WTC11 (cell line): ENCODE measurements at regions of chr4 and their contacts with region 1.

Region 1: DNA sequence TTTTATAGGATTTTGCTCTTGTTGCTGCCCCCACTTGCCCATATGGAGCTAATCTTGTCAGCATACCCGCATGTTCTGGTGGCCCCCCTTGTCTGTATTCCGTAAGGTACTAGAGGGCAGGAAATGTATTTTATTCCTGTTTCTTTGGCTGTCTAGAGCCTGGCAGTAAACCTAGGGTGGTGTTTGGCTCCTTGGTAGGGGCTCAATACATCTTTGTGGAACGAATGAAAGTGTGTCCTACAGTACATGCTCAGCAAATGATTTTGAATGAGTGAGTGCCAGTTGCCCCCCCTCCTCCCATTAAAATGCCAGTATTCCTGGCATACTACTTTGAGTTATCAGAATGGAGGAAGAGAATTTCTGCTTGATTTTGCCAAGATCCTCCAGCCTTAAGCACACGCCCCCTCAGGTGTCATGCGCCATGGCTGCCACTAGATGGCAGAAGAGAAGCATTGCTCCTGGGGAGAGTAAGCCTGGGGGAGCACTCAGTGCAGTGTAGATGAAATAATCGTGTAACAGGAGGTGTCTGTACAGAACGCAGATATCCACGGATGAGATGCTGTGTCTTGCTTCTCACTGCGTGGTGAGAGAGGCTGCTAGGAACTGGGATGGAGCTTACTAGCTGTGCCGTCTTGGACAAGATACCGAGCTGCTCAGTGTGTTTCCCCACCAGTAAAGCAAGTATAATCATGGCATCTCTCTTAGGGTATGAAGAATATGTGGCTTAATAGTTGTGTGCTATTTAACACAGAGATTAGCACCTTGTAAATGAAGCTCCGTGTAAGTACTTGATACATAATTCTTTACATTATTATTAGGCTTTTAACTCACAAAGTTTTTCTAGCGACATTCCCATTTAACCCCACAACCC is 17.2 kb upstream of the RNF212 start:
- DNase-seq: peak; percentile 73
- ATAC-seq: peak; percentile 95
- H3K4me3 Mint-ChIP-seq: no peak overlapping the region
- H3K27ac Mint-ChIP-seq: no peak overlapping the region
- H3K4me1 Mint-ChIP-seq: no peaks in the 10 kb centered on the region
- H3K27me3 Mint-ChIP-seq: peaks cover 4% of the 10 kb centered on the region
- CTCF ChIP-seq: peak; percentile 99

Region 2: GRCh38 chr4:1113311-1114009 is 17.1 kb before region 1 on chr4 and contains the start of gene RNF212:
- CTCF ChIA-PET with region 1: interaction called, 10 read pairs
- POLR2A ChIA-PET with region 1: no interaction called
- DNase-seq: peak; percentile 51
- ATAC-seq: peak; percentile 75
- H3K4me3 Mint-ChIP-seq: peak within 1 kb of the TSS; percentile 55
- H3K27ac Mint-ChIP-seq: no peak within 1 kb of the TSS
- H3K4me1 Mint-ChIP-seq: 0 out of 2 replicates have a peak, but pooled peaks cover 9% of the 10 kb centered on the region
- H3K27me3 Mint-ChIP-seq: peaks cover 54% of the 10 kb centered on the region
- CTCF ChIP-seq: no peak
- total RNA-seq, gene RNF212: 1.0 to 2.9 TPM (median 2.7 TPM) in 3 replicates

Region 3: DNA sequence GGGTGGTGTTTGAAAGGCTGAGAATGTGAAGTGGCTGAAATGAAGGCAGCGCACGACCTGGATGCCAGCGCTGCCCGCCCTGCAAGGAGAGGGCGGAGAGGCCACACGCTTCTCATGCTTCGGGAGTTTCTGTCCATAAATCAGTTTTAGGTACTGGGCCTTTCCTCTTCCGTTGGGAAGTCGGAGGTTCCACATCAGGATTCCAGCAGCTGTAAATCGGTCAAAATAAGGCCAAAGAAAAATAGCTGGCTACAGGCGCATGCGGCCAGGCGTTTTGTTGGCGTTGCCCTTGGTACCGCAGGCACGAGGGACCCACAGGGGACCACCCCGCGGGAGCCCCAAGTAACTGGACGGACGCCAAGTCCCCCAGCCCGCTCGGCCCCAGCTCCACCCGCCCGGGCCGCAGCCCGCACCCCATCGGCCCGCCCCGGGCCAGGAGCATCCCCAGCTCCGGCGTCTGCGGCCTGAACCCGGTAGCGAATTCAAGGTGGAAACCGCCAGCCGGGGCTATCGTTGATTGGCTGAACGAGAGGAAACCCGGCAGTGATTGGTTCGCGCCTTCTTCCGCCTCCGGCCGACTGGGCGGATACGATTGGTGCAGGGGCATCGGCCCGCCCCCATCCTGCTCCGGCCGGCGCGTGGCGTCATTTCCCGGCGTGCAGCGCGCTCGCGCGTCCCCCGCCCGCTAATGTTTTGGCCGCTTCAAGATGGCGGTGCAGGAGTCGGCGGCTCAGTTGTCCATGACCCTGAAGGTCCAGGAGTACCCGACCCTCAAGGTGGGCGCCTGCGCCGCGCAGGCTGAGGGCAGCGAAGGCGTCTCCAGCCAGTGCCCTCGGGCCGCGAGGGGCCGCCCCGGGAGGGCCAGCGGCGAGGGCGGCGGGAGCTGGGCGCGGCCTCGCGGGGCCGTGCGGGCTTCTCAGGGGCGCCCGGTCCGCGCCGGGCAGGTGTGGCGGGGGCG is 158.9 kb after region 1 on chr4 and contains the start of gene MAEA:
- CTCF ChIA-PET with region 1: interaction called, 11 read pairs
- POLR2A ChIA-PET with region 1: no interaction called
- DNase-seq: peak; percentile 98
- ATAC-seq: peak; percentile 96
- H3K4me3 Mint-ChIP-seq: peak within 1 kb of the TSS; percentile 97
- H3K27ac Mint-ChIP-seq: peak within 1 kb of the TSS; percentile 97
- H3K4me1 Mint-ChIP-seq: peaks cover 39% of the 10 kb centered on the region
- H3K27me3 Mint-ChIP-seq: peaks cover 10% of the 10 kb centered on the region
- CTCF ChIP-seq: no peak
- total RNA-seq, gene MAEA: 66.9 to 86.9 TPM (median 79.8 TPM) in 3 replicates